HepG2 (cell line): ENCODE measurements at regions of chr16 and their contacts with region 1.

Region 1: GRCh38 chr16:56425439-56425832 is at the start of gene AMFR:
- DNase-seq: peak; percentile 74
- ATAC-seq: peak; percentile 94
- H3K4me3 ChIP-seq: peak within 1 kb of the TSS; percentile 78 to 90 (median 89)
- H3K27ac ChIP-seq: peak within 1 kb of the TSS; percentile 68
- H3K4me1 ChIP-seq: peaks cover 50% of the 10 kb centered on the region
- H3K27me3 ChIP-seq: no peaks in the 10 kb centered on the region; a peak in 2 of 5 replicates
- CTCF ChIP-seq: peak; percentile 62
- EP300 ChIP-seq: no peak
- POLR2A ChIP-seq: no peak; a peak in 1 of 4 replicates
- RAD21 ChIP-seq: peak; percentile 82
- total RNA-seq, gene AMFR: 80.0 and 108 TPM in 2 replicates

Region 2: GRCh38 chr16:56409195-56409594 is 16.2 kb before region 1 on chr16:
- CTCF ChIA-PET with region 1: interaction called, 3 read pairs
- POLR2A ChIA-PET with region 1: interaction called, 8 read pairs
- in situ Hi-C with region 1: no loop called
- intact Hi-C with region 1: loop called (anchors 2 kb)
- DNase-seq: peak; percentile 61
- ATAC-seq: peak; percentile 80
- H3K4me3 ChIP-seq: no peak overlapping the region
- H3K27ac ChIP-seq: peak overlapping the region; percentile 72
- H3K4me1 ChIP-seq: peaks cover 24% of the 10 kb centered on the region
- H3K27me3 ChIP-seq: no peaks in the 10 kb centered on the region
- CTCF ChIP-seq: no peak
- EP300 ChIP-seq: no peak
- POLR2A ChIP-seq: no peak
- RAD21 ChIP-seq: no peak